Posterior vena cava (tissue), 2 donors: ENCODE measurements at regions of chr9 and their contacts with region 1.

Region 1: GRCh38 chr9:112166172-112167140 is 8.6 kb downstream of the SUSD1 start:
- DNase-seq: no peak

Region 2: GRCh38 chr9:112186695-112187094 is 20.2 kb after region 1 on chr9:
- intact Hi-C with region 1: loop called in 1 of 2 experiments (anchors 1 kb)
- DNase-seq: no peak